Activated B cell treated with CpG ODN at 0.5 μM for 24 hours (primary cell): ENCODE measurements at regions of chr11 and their contacts with region 1.

Region 1: DNA sequence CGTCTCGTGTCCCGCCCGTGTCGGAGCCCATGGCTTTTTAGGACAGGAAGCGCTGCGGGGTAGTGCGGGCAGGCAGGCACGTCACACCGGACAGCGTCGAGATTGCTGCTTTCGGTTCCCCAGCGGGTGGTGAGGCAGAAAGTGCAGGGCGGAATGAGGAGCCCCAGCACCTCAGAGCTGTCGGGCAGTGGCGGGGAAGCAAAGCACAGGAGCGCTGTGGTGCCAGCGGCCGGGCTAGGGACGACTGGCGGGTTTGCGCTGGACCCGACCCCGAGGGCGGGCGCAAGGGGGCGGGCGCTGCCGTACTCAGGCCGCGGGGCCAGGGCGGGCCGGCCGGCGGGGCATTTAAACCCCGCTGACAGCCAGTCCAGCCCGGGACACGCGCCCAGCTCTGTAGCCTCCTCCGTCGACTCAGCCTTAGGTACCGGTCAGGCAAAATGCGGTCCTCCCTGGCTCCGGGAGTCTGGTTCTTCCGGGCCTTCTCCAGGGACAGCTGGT is at the start of gene SLC37A2:
- DNase-seq: peak; percentile 64
- ATAC-seq: peak; percentile 95
- H3K4me3 Mint-ChIP-seq: peak within 1 kb of the TSS; percentile 86
- H3K27ac Mint-ChIP-seq: peak within 1 kb of the TSS; percentile 83
- H3K4me1 Mint-ChIP-seq: peaks cover 23% of the 10 kb centered on the region
- H3K27me3 Mint-ChIP-seq: peaks cover 9% of the 10 kb centered on the region
- CTCF ChIP-seq: no peak
- total RNA-seq, gene SLC37A2: 21.3 and 27.5 TPM in 2 replicates

Region 2: DNA sequence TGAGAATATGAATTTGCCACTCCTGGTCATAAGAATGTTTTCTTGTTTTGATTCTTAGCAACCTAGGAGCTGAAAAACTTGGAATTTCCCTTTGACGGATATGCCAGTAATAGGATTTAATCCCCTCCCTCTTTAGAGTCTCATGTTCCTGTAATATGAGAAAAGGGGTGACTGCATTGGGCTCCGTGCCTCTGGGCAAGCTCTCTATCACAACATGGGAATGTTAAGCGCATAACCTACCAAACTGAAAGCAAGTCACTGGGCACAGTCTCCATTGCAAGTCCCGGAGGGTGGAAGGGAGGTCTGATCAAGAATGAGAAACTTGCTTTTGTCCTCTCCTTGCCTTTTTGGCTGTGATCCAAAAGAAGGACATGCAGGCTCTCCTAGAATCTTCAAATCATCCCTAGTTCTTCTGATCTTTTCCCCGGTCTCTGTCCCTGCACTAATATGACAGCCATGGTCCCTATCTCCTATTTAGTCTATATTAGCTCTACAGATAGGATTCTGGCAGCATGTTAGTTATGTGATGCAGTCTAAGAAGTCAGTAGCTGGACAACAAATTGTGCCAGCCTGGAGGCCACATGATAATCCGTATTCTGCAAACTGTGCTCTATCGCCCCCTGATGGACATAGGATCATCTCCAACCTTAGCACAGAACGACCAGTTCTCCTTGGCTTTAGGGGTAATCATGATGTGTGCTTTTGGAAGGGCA is 868.1 kb before region 1 on chr11:
- CTCF ChIA-PET with region 1: no interaction called
- POLR2A ChIA-PET with region 1: no interaction called
- intact Hi-C with region 1: loop called (anchors 5 kb)
- DNase-seq: no peak
- ATAC-seq: no peak
- H3K4me3 Mint-ChIP-seq: no peak overlapping the region
- H3K27ac Mint-ChIP-seq: no peak overlapping the region
- H3K4me1 Mint-ChIP-seq: peaks cover 2% of the 10 kb centered on the region
- H3K27me3 Mint-ChIP-seq: peaks cover 2% of the 10 kb centered on the region
- CTCF ChIP-seq: no peak

Region 3: DNA sequence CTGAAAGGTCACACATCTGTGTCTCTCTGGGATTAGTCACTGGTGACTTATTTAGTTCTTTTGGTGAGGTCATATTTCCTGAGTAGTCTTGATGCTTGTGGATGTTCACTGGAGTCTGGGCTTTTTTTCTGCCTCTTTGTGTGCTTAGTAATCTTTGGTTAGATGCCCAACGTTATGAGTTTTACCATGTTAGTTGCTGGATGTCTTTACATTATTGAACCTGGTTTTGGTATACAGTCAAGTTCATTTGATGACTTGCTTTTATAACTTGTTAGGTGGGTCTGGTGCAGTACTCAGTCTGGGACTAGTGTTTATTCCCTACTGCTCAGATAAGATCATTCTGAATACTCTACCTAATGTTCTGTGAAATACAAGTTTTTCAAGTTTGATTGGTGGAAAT is 26.0 kb before region 1 on chr11:
- CTCF ChIA-PET with region 1: no interaction called
- POLR2A ChIA-PET with region 1: no interaction called
- intact Hi-C with region 1: loop called (anchors 2 kb)
- DNase-seq: no peak
- ATAC-seq: peak; percentile 66
- H3K4me3 Mint-ChIP-seq: no peak overlapping the region
- H3K27ac Mint-ChIP-seq: peak overlapping the region; percentile 10
- H3K4me1 Mint-ChIP-seq: peaks cover 7% of the 10 kb centered on the region
- H3K27me3 Mint-ChIP-seq: no peaks in the 10 kb centered on the region
- CTCF ChIP-seq: no peak

Region 4: GRCh38 chr11:125082611-125083311 is 19.8 kb after region 1 on chr11:
- CTCF ChIA-PET with region 1: no interaction called
- POLR2A ChIA-PET with region 1: interaction called, 15 read pairs
- intact Hi-C with region 1: no loop called
- DNase-seq: no peak
- ATAC-seq: no peak
- H3K4me3 Mint-ChIP-seq: no peak overlapping the region
- H3K27ac Mint-ChIP-seq: no peak overlapping the region
- H3K4me1 Mint-ChIP-seq: no peaks in the 10 kb centered on the region
- H3K27me3 Mint-ChIP-seq: no peaks in the 10 kb centered on the region
- CTCF ChIP-seq: no peak

Region 5: DNA sequence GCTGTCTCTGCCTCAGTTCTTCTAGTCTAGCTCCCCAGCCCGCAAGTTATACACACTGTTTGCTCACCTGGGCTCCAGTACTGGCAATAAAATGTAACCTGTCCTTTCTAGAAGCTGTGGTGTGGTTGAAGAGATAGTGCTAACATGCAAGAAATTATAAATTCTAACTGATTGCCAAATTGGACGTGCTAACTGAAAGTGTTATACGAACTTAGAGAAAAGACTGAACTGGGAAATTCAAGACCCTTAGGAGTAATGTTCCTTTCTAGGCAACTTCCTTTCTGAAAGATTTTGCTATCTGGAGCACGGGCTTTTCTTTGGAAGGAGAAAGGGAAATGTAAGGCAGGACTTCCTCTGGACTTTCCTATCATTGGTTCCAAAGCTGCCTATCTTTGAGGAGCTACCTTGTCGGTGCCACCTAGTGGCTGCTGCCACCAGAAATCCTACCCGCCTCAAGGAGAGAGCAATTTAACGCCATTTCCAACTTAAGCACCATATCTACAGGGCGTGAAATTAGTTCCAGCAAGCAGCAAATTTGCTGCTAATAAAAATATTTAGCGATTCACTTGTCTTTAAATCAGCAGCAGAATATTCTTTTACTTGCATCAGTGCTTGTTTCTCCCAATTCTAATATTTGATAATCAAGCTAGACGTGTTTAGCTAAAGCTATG is 61.1 kb after region 1 on chr11:
- CTCF ChIA-PET with region 1: interaction called, 17 read pairs
- POLR2A ChIA-PET with region 1: interaction called, 6 read pairs
- intact Hi-C with region 1: no loop called
- DNase-seq: no peak
- ATAC-seq: peak; percentile 71
- H3K4me3 Mint-ChIP-seq: peak overlapping the region; percentile 26
- H3K27ac Mint-ChIP-seq: no peak overlapping the region
- H3K4me1 Mint-ChIP-seq: peaks cover 14% of the 10 kb centered on the region
- H3K27me3 Mint-ChIP-seq: peaks cover 32% of the 10 kb centered on the region
- CTCF ChIP-seq: no peak